SK-N-SH (cell line): ENCODE measurements at regions of chr7 and their contacts with region 1.

Region 1: GRCh38 chr7:97872025-97872669 is at the start of gene ASNS:
- DNase-seq: peak; percentile 95
- H3K4me3 ChIP-seq: peak within 1 kb of the TSS; percentile 98 to 100
- H3K27ac ChIP-seq: peak within 1 kb of the TSS; percentile 61 to 84; a peak in 3 of 4 replicates
- H3K4me1 ChIP-seq: peaks cover 4 to 6% of the 10 kb centered on the region in 2 experiments; a peak in 3 of 4 replicates
- H3K27me3 ChIP-seq: no peaks in the 10 kb centered on the region
- CTCF ChIP-seq: 0 out of 2 replicates have a peak, but pooled peaks have one; percentile 20
- EP300 ChIP-seq: no peak; a peak in 1 of 4 replicates
- RAD21 ChIP-seq: no peak
- polyA plus RNA-seq, gene ASNS: 11.8 and 13.9 TPM in 2 replicates

Region 2: DNA sequence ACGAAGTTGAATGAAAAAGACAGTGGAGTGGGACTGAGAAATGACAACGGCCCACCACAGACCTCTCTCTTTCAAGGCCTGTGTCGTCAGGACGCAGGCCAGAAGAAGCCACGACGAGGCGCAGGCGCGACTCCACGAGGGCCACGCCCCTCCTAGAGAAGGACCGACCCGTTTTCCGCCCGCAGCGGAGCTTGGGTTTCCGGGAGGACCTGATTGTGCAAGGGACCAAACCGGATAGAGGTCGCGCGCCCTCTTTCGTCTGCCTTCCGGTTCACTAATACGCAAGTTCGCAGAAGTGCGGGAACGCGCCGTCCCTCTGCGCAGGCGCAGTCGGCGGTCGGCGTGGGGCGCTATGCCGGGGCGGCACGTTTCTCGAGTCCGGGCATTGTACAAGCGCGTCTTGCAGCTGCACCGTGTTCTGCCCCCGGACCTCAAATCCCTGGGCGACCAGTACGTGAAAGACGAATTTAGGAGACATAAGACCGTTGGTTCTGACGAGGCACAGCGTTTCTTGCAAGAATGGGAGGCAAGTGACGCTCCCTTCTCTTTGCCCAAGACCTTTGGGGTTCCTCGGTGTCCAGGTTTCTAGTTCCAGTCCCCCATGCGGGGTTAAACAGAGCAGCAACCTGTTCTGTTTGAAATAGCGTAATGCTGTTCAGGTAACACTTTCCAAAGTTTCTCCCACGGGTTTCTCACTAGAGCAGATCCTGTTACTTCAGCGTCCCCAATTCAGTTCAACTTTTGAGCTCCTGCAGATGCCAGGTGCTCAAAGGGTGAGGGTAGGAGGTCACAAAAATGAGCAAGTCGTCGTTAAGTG is 754.6 kb before region 1 on chr7 and contains the start of gene SDHAF3:
- CTCF ChIA-PET with region 1: interaction called, 3 read pairs
- POLR2A ChIA-PET with region 1: interaction called, 11 read pairs
- DNase-seq: peak; percentile 97
- H3K4me3 ChIP-seq: peak within 1 kb of the TSS; percentile 90 to 100
- H3K27ac ChIP-seq: peak within 1 kb of the TSS; percentile 60 to 94
- H3K4me1 ChIP-seq: peaks cover 0 to 11% of the 10 kb centered on the region in 2 experiments; a peak in 2 of 4 replicates
- H3K27me3 ChIP-seq: no peaks in the 10 kb centered on the region
- CTCF ChIP-seq: peak; percentile 25
- EP300 ChIP-seq: peak in 1 of 2 experiments; percentile 63; a peak in 3 of 4 replicates
- RAD21 ChIP-seq: no peak
- polyA plus RNA-seq, gene SDHAF3: 14.6 and 17.0 TPM in 2 replicates

Region 3: DNA sequence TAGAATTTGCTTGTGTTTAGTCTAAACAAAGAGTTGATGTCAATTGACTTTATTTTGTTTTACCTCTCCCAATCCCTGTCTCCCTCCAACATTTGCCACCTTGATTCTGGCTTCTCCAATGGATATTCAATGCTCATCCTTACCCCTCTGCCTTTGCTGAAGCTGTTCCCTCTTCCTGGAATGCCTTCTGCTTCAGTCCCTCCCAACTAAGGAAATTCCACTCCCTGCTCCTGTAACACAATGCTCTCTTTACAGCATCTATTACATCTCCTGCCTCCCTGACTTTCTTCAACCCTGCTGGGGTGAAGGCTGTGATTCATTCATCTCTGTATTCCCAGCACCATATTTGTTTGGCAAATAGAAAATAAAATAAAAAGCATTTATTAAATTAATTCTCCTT is 174.8 kb before region 1 on chr7:
- CTCF ChIA-PET with region 1: no interaction called
- POLR2A ChIA-PET with region 1: no interaction called
- DNase-seq: no peak
- H3K4me3 ChIP-seq: no peak overlapping the region
- H3K27ac ChIP-seq: no peak overlapping the region
- H3K4me1 ChIP-seq: no peaks in the 10 kb centered on the region
- H3K27me3 ChIP-seq: no peaks in the 10 kb centered on the region
- CTCF ChIP-seq: no peak
- EP300 ChIP-seq: no peak
- RAD21 ChIP-seq: no peak